Panc1 (cell line): ENCODE measurements at regions of chr6 and their contacts with region 1.

Region 1: DNA sequence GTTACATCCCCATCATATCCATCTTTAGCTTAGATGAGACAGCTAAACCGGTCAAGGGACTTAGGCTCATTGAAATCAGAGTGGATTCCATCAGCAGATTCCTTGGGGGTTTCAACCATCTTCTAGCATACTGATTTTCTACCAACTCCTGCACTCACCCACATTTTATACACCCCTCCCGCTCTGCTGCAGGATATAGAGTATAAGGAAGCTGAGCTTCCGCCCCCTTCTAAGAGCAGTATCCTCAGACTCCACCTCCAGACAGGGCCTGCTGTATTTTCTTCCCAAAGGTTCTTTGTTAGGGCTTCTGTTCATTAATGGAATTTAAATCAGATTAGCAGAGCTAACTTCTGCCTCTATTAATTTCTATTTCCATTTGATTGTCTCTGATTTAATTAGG is 9.9 kb upstream of the NHLRC1 start:
- DNase-seq: no peak
- ATAC-seq: no peak
- H3K4me3 ChIP-seq: no peak overlapping the region
- H3K27ac ChIP-seq: no peak overlapping the region
- H3K4me1 ChIP-seq: no peaks in the 10 kb centered on the region
- H3K27me3 ChIP-seq: no peaks in the 10 kb centered on the region
- CTCF ChIP-seq: no peak

Region 2: GRCh38 chr6:17754254-17754653 is 378.1 kb before region 1 on chr6:
- CTCF ChIA-PET with region 1: no interaction called
- POLR2A ChIA-PET with region 1: interaction called, 13 read pairs
- in situ Hi-C with region 1: no loop called
- intact Hi-C with region 1: no loop called
- DNase-seq: no peak
- ATAC-seq: no peak
- H3K4me3 ChIP-seq: no peak overlapping the region
- H3K27ac ChIP-seq: no peak overlapping the region
- H3K4me1 ChIP-seq: no peaks in the 10 kb centered on the region
- H3K27me3 ChIP-seq: no peaks in the 10 kb centered on the region
- CTCF ChIP-seq: no peak